Mucosa of descending colon (tissue), 3 donors: ENCODE measurements at regions of chr10 and their contacts with region 1.

Region 1: GRCh38 chr10:75401569-75402485 is at the start of gene ZNF503:
- DNase-seq: peak; percentile 94 to 95 (median 95)
- ATAC-seq: peak; percentile 75
- H3K4me3 ChIP-seq: peak within 1 kb of the TSS; percentile 57
- H3K4me1 ChIP-seq: peaks cover 15% of the 10 kb centered on the region
- CTCF ChIP-seq: no peak
- total RNA-seq, gene ZNF503: 3.7 to 32.3 (median 6.1) TPM

Region 2: GRCh38 chr10:75508239-75508813 is 106.5 kb after region 1 on chr10:
- intact Hi-C with region 1: loop called in 1 of 2 experiments (anchors 10 kb)
- DNase-seq: no peak
- ATAC-seq: peak; percentile 61
- H3K4me3 ChIP-seq: no peak overlapping the region
- H3K4me1 ChIP-seq: peaks cover 12% of the 10 kb centered on the region
- CTCF ChIP-seq: no peak

Region 3: DNA sequence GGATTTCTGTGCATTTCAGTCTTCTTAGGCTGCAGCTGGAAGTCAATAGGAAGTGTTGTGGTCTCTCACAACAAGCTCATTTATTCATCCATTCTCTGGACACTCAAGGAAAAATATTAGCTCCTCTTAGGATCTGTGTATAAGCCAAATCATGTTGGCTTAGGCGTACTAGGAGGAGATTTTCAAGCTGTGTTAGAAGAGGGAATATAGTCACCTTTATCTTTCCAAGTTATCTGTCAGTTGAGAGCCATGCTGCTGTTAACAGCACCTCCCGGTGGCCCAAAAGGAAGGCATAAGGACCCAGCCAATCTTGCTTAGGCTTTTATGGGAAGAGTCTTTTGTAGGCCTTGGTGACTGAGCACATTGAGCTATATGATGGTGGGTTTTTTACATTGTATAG is 249.6 kb after region 1 on chr10:
- intact Hi-C with region 1: loop called in 1 of 2 experiments (anchors 5 kb)
- DNase-seq: peak in 2 of 3 donors; percentile 65 to 72
- ATAC-seq: peak; percentile 67
- H3K4me3 ChIP-seq: no peak overlapping the region
- H3K4me1 ChIP-seq: no peaks in the 10 kb centered on the region
- CTCF ChIP-seq: no peak

Region 4: GRCh38 chr10:75910032-75910431 is 508.2 kb after region 1 on chr10:
- intact Hi-C with region 1: loop called in 1 of 2 experiments (anchors 10 kb)
- DNase-seq: peak in 1 of 3 donors; percentile 17
- ATAC-seq: no peak
- H3K4me3 ChIP-seq: no peak overlapping the region
- H3K4me1 ChIP-seq: no peaks in the 10 kb centered on the region
- CTCF ChIP-seq: no peak

Region 5: DNA sequence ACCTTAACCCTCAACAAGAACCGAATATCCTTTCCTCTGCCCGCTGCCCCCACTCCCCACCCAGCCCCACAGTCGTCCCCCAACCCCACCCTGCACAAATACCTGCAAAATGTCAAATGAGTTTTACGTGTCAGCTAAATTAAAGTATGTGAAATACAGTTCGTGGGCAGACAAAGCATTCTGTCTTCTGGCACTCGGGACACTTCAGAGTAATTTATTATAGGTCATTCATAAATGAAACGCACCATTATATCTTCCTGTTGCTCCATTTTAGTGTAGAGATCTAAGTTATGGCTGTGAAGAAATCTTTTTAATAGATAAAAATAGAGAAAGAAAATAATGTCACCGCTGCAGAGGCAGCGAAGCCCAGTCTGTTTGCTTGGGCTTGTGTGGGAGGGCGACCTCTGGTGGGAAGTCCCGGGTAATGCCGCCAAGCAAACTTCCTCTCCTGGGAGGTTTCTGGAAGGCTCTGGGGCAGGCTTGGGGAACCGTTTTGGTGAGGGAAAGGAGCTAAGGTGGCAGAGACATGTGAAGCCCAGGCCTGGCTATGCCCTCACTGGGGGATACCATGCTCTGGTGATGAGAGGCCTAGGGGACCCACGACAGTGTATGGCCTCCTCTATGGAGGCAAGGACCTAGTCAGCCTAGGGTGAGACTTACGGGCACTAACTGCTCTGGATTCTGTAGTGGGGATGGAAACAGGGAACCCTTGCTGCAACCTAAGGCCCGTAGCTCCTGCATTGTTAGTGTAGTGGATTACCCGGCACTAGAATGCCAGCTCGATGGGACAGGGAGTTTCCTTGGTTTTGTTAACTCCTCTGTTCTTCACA is 634.5 kb after region 1 on chr10:
- intact Hi-C with region 1: loop called (anchors 5 to 10 kb)
- DNase-seq: peak; percentile 63 to 83 (median 82)
- ATAC-seq: peak; percentile 87
- H3K4me3 ChIP-seq: no peak overlapping the region
- H3K4me1 ChIP-seq: peaks cover 10% of the 10 kb centered on the region
- CTCF ChIP-seq: peak; percentile 82